Mammary epithelial cell (primary cell): ENCODE measurements at regions of chr11 and their contacts with region 1.

Region 1: GRCh38 chr11:36478700-36479329 is 31.3 kb downstream of the TRAF6 start:
- DNase-seq: peak; percentile 27
- H3K4me3 ChIP-seq: no peak overlapping the region
- H3K27ac ChIP-seq: no peak overlapping the region
- H3K4me1 ChIP-seq: peaks cover 4% of the 10 kb centered on the region
- H3K27me3 ChIP-seq: no peaks in the 10 kb centered on the region
- CTCF ChIP-seq: peak; percentile 57 to 65

Region 2: GRCh38 chr11:36289226-36289852 is 189.5 kb before region 1 on chr11 and contains the start of gene COMMD9:
- CTCF ChIA-PET with region 1: interaction called, 15 read pairs
- dilution Hi-C with region 1: no loop called
- in situ Hi-C with region 1: loop called in 1 of 2 experiments (anchors 10 kb)
- intact Hi-C with region 1: loop called (anchors 1 kb)
- DNase-seq: peak; percentile 91
- H3K4me3 ChIP-seq: peak within 1 kb of the TSS; percentile 66 to 97 (median 94)
- H3K27ac ChIP-seq: peak within 1 kb of the TSS; percentile 48
- H3K4me1 ChIP-seq: peaks cover 13% of the 10 kb centered on the region
- H3K27me3 ChIP-seq: no peaks in the 10 kb centered on the region
- CTCF ChIP-seq: no peak
- total RNA-seq, gene COMMD9: 30.7 to 46.5 TPM

Region 3: GRCh38 chr11:36306888-36307287 is 171.9 kb before region 1 on chr11:
- CTCF ChIA-PET with region 1: no interaction called
- dilution Hi-C with region 1: no loop called
- in situ Hi-C with region 1: loop called in 1 of 2 experiments (anchors 10 kb)
- intact Hi-C with region 1: loop called (anchors 1 kb)
- DNase-seq: no peak
- H3K4me3 ChIP-seq: no peak overlapping the region
- H3K27ac ChIP-seq: no peak overlapping the region
- H3K4me1 ChIP-seq: peaks cover 18% of the 10 kb centered on the region
- H3K27me3 ChIP-seq: no peaks in the 10 kb centered on the region
- CTCF ChIP-seq: peak; percentile 28 to 42

Region 4: GRCh38 chr11:36672813-36673450 is 194.1 kb after region 1 on chr11:
- CTCF ChIA-PET with region 1: no interaction called
- dilution Hi-C with region 1: no loop called
- in situ Hi-C with region 1: no loop called
- intact Hi-C with region 1: no loop called
- DNase-seq: peak; percentile 39
- H3K4me3 ChIP-seq: no peak overlapping the region
- H3K27ac ChIP-seq: no peak overlapping the region
- H3K4me1 ChIP-seq: no peaks in the 10 kb centered on the region
- H3K27me3 ChIP-seq: no peaks in the 10 kb centered on the region
- CTCF ChIP-seq: peak; percentile 64 to 74